Sciatic nerve (tissue), 2 donors: ENCODE measurements at regions of chr5 and their contacts with region 1.

Region 1: DNA sequence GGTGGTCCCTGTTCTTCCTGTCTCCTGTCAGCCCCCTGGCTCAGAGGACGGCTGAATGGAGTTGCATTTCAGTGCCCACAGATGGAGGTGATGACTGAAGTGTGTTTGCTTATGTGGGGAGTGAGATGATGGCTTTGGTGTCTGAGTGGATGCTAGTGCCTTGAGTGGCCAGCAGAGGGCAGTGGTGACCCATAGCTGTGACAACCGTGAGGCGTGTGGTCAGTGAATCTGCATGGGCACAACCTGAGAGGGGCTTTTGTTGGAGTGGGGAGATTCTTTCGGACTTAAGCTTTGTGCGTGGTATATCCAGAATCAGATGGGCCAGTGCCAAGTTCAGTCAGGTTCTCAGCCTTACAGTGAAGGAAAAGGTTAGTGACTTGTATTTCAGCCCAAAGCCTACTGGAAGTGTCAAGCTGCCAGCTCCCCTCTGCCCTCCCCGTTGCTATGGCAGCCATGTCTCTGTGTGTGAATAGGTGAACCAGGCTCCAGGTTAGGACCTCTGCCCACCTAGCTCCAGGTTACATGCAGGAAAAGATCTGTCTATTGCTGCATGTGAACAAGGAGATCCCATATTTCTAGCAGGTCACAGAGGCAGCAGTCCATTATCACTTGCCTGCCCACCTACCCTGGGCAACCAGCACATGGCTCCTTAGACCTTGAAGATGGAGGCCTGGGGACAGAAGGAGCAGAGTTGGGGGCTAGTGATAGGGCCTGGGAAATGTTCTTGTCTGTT is 14.7 kb upstream of the CXXC5 start:
- DNase-seq: peak; percentile 84
- ATAC-seq: peak; percentile 48

Region 2: DNA sequence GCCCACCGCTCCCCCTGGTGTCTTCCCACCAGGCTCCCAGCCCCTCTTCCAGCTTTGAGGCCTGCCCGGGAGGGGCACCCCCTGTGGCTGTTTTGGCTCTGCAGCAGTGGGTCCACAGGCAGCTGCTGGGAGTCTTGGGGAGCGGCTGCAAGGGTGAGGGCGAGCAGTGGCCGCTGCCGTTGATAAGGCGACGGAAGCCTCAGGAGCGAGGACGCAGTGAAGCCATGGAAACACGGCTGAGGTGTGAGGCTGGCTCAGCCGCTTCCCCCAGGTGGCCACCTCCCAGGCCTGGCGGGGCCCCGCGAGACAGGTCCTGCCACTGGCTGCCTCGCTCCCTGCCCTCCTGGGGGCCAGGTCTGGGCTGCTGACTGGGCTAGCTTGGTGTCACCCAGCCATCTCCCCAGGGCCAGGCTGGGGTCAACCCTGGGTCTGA is 56.2 kb after region 1 on chr5:
- intact Hi-C with region 1: loop called (anchors 5 kb)
- DNase-seq: no peak
- ATAC-seq: peak; percentile 51

Region 3: GRCh38 chr5:139765409-139766217 is 132.2 kb after region 1 on chr5:
- intact Hi-C with region 1: loop called (anchors 2 kb)
- DNase-seq: peak; percentile 91
- ATAC-seq: peak; percentile 91